ENCODE measurements at regions of chr13 and their contacts with region 1.

Region 1: GRCh38 chr13:21759911-21760310 is 89.0 kb downstream of the FGF9 start:
- DNase-seq: no peak
- ATAC-seq: no peak
- H3K4me3 ChIP-seq: no peak overlapping the region
- H3K27ac ChIP-seq: no peak overlapping the region
- H3K4me1 ChIP-seq: no peaks in the 10 kb centered on the region
- H3K27me3 ChIP-seq: no peaks in the 10 kb centered on the region
- CTCF ChIP-seq: no peak
- POLR2A ChIP-seq: no peak

Region 2: GRCh38 chr13:21703824-21704499 is 55.9 kb before region 1 on chr13:
- intact Hi-C with region 1: no loop called
- DNase-seq: no peak
- ATAC-seq: no peak
- H3K4me3 ChIP-seq: no peak overlapping the region
- H3K27ac ChIP-seq: no peak overlapping the region
- H3K4me1 ChIP-seq: peaks cover 0 to 12% (median 5%) of the 10 kb centered on the region in 12 donors
- H3K27me3 ChIP-seq: no peaks in the 10 kb centered on the region
- CTCF ChIP-seq: no peak
- POLR2A ChIP-seq: no peak

Region 3: GRCh38 chr13:21894703-21895699 is 135.1 kb after region 1 on chr13:
- intact Hi-C with region 1: loop called in 1 of 10 experiments (anchors 5 kb)
- DNase-seq: no peak
- ATAC-seq: no peak
- H3K4me3 ChIP-seq: no peak overlapping the region
- H3K27ac ChIP-seq: no peak overlapping the region
- H3K4me1 ChIP-seq: no peaks in the 10 kb centered on the region
- H3K27me3 ChIP-seq: no peaks in the 10 kb centered on the region
- CTCF ChIP-seq: no peak
- POLR2A ChIP-seq: no peak

Measured in heart left ventricle (tissue), 16 donors.